HepG2 (cell line): ENCODE measurements at regions of chr22 and their contacts with region 1.

Region 1: DNA sequence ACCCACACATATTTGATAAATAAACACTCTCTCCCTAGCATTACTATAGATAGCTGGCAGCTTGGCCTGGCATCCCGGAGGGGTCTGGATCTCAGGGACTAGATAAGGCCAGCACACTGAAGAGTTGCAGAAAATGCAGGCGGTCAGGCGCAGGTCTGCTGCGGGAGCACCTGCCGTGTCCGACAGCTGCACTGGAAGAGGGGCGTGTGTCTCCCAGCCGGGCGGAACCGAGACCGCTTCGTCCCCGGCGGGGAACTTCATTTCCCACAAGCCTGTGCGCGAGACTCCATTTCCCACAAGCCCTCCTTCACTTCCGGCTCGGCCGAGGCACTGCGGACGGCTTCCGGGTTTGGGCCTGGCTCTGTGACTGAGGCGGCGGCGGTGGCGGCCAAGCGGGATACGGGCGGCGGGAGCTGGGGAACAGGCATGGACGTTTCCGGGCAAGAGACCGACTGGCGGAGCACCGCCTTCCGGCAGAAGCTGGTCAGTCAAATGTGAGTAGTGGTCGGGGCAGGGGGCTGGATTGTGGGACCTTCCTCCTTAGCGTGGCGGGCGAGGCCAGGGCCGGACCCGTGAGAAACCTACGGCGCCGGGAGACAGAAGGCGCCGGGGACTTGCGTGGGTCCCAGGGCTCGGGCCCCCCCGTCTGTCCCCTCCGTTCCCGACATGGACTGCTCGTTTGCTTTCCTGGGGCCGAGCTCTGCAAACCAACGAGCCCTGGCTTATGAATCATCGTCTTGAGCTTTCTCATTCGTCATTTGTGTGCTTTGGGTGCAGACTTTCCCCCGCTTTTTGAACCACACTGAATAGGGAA is at the start of gene MED15:
- DNase-seq: peak; percentile 87
- ATAC-seq: peak; percentile 91
- H3K4me3 ChIP-seq: peak within 1 kb of the TSS; percentile 92 to 94 (median 93)
- H3K27ac ChIP-seq: peak within 1 kb of the TSS; percentile 87
- H3K4me1 ChIP-seq: peaks cover 47% of the 10 kb centered on the region
- H3K27me3 ChIP-seq: peaks cover 0 to 4% of the 10 kb centered on the region in 2 experiments; a peak in 1 of 5 replicates
- CTCF ChIP-seq: peak; percentile 18; the same call in 1 of the 2 replicates
- EP300 ChIP-seq: peak in 1 of 2 experiments; percentile 25; a peak in 1 of 4 replicates
- POLR2A ChIP-seq: peak; percentile 75 to 82
- RAD21 ChIP-seq: no peak
- total RNA-seq, gene MED15: 9.8 and 14.3 TPM in 2 replicates

Region 2: DNA sequence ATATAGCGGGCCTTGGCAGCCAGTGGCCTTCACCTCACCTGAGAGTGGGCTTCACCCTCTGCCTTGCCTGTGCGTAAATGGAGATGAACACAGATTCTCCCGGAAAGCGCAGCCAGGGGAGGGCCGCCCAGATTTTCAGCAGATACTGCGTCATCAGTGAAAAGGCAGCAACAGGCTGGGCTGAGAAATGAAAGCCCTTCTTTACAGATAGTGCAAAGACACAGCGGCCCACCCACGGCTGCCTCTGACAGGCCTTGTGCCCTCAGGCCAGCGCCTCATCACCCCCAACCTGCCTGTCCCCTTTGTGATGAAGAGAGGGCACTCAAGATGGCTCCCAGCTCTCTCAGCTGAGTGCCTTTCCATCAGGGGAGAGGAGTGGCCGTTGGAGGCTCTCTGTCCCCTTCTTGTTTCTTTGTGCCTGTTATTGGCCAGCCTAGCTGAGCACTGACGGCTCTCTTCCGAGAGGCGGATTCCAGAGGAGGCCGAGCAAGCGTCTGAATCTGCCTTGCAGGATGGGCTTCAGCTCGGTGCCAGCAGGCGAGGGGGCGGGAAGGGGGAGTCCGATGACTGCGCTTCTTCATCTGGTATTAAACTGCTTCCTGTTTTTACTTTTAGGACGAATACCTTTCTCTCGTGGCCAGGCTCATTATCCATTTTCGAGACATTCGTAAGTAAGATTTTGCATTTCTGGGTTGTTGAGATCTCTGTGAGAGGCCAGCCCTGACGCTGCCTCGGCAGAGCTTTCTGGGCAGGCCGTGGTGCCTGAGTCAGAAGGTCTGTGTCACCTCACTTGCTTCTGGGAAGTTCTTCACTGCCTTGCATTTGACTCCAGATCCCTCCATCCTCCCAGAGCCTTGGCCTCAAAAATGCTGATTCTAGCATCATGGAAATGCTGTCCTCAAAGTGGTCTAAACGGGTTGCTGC is 43.6 kb after region 1 on chr22:
- CTCF ChIA-PET with region 1: no interaction called
- POLR2A ChIA-PET with region 1: interaction called, 16 read pairs
- in situ Hi-C with region 1: no loop called
- intact Hi-C with region 1: loop called (anchors 1 kb)
- DNase-seq: no peak
- ATAC-seq: no peak
- H3K4me3 ChIP-seq: no peak overlapping the region
- H3K27ac ChIP-seq: peak overlapping the region; percentile 89
- H3K4me1 ChIP-seq: peaks cover 43% of the 10 kb centered on the region
- H3K27me3 ChIP-seq: no peaks in the 10 kb centered on the region
- CTCF ChIP-seq: no peak
- EP300 ChIP-seq: no peak
- POLR2A ChIP-seq: no peak
- RAD21 ChIP-seq: no peak